GM10248 (cell line): ENCODE measurements at regions of chr9 and their contacts with region 1.

Region 1: GRCh38 chr9:35538361-35539234 is 48.7 kb downstream of the RUSC2 start:
- DNase-seq: no peak
- CTCF ChIP-seq: no peak

Region 2: DNA sequence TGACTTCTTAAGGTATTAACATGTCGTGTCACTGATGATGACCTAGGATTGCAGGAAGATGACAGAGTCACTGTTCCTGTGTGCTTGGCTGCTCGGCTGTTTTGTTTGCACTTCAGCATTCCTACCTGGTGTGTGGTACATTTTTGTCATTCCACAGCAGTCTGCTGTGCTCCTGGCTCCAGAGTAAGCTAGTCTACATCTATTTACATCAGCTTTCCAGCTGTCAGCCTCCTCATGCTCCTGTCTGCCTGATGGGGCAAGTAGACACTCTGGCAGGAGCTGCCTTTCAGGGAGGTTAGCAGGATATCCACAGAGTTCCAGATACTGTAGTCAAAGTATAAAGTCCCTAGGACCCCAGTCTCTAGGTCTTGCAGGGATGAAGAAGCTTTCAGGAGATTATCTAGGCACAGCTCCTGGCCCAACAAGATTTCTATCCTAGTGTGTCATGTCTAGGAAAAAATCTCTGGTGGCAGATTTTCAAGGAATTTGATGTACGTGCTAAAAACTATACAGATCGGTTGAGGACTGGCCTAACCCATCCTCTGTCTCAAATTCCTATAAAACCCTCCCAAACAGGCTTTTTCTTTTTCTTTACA is 20.3 kb before region 1 on chr9:
- CTCF ChIA-PET with region 1: interaction called, 10 read pairs
- POLR2A ChIA-PET with region 1: no interaction called
- DNase-seq: no peak
- CTCF ChIP-seq: no peak

Region 3: DNA sequence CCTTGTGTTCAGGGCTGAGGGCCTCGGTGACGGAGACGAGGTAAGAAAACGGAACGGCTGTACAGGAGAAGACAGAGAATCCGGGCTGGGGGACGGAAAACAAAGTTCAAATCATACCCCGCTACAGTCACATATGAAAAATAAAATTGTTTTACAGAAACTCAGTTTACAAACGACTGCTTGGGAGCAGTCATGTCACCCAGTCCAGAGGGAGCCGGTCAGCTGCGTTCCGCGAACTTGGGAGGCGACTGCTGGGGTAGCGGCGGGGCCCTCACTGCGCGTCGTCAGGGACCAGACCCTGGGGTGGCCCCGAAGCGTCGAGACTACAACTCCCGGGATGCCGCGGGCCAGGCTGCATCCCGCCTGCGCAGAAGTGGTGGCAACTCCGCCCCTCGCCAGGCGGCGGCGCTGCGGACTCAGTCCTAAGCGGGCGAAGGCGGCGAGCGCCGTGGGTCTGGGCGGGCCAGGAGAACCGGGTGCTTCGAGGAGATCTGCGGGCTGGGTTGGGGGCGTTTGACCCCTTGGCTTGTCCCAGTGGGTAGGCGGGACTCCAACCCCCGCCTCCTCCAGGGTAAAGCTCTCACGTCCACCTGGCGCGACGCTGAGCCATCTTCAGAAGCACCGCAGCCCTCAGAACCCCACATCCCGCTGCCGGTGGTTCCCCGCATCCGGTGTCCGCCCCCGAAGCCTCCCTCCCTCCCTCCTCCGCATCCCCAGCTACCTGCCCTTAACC is 108.1 kb after region 1 on chr9:
- CTCF ChIA-PET with region 1: no interaction called
- POLR2A ChIA-PET with region 1: no interaction called
- DNase-seq: peak; percentile 94
- CTCF ChIP-seq: peak; percentile 98